Psoas muscle (tissue), 8 donors: ENCODE measurements at regions of chr12 and their contacts with region 1.

Region 1: GRCh38 chr12:65189028-65189718 is 19.8 kb downstream of the LEMD3 start:
- DNase-seq: no peak
- ATAC-seq: peak in 1 of 4 donors; percentile 43
- H3K4me3 ChIP-seq: no peak overlapping the region
- H3K27ac ChIP-seq: no peak overlapping the region
- H3K4me1 ChIP-seq: peaks cover 45% of the 10 kb centered on the region
- H3K27me3 ChIP-seq: no peaks in the 10 kb centered on the region
- CTCF ChIP-seq: no peak

Region 2: DNA sequence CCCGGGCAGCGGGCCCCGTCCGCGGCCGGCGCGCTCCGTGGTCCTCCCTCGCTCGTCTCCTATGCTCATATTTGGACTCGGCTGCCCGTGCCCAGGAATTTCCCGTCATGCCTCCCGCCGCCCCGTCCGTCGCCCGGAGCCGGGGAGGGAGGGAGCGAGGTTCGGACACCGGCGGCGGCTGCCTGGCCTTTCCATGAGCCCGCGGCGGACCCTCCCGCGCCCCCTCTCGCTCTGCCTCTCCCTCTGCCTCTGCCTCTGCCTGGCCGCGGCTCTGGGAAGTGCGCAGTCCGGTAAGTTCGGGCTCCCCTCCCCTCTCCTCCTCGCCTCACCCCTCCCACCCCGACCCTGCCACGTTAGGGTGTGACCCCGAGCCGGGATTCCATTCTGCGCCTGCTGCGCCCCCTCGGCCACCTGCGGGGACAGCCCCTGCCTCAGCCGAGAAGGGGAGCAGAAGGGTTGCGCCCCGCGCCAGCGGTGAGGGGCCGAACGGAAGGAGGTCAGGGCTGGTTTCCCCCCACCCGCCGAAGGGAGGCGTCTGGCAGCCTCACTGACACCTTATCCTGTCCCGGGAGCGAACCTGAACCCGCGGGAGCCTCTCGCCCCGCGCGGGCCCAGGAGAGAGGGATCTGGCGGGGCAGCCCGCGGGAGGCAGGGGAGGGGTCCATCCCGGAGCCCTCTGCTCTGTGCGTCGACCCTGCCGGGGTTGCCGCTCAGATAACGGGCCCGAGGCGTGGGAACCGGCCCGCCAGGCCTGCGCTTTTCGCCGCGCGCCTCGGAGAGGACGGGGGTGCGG is 89.6 kb after region 1 on chr12 and contains the start of gene MSRB3:
- intact Hi-C with region 1: loop called in 1 of 2 experiments (anchors 10 kb)
- DNase-seq: peak; percentile 79 to 89
- ATAC-seq: peak; percentile 94 to 97 (median 95)
- H3K4me3 ChIP-seq: peak within 1 kb of the TSS; percentile 90
- H3K27ac ChIP-seq: peak within 1 kb of the TSS; percentile 93
- H3K4me1 ChIP-seq: peaks cover 26% of the 10 kb centered on the region
- H3K27me3 ChIP-seq: no peaks in the 10 kb centered on the region
- CTCF ChIP-seq: no peak
- total RNA-seq, gene MSRB3: 48.3 to 64.1 (median 56.6) TPM

Region 3: GRCh38 chr12:65319688-65320200 is 130.6 kb after region 1 on chr12:
- intact Hi-C with region 1: no loop called
- DNase-seq: no peak
- ATAC-seq: no peak
- H3K4me3 ChIP-seq: no peak overlapping the region
- H3K27ac ChIP-seq: no peak overlapping the region
- H3K4me1 ChIP-seq: peaks cover 17% of the 10 kb centered on the region
- H3K27me3 ChIP-seq: no peaks in the 10 kb centered on the region
- CTCF ChIP-seq: no peak

Region 4: DNA sequence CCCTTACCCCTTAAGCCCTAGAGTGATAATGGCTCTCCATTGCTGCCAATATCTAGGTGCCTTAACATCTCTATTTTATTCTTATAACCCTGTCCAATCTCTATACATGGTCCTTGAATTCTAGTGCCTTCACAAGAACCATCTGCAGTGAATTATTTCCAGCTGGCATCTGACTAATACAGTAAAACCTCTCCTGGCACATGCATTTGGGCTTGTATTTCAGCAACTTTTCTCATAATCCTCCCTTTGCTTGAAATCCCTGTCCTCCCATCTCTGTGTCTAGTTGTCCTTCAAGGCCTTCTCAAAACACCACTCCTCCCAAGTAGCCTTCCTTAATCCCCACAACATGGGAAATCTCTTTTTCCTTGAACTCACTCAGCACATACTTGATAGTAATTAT is 620.9 kb after region 1 on chr12:
- intact Hi-C with region 1: no loop called
- DNase-seq: no peak
- ATAC-seq: no peak
- H3K4me3 ChIP-seq: no peak overlapping the region
- H3K27ac ChIP-seq: no peak overlapping the region
- H3K4me1 ChIP-seq: no peaks in the 10 kb centered on the region
- H3K27me3 ChIP-seq: peaks cover 0 to 11% (median 3%) of the 10 kb centered on the region in 3 donors
- CTCF ChIP-seq: no peak